ENCODE measurements at regions of chr1 and their contacts with region 1.

Region 1: DNA sequence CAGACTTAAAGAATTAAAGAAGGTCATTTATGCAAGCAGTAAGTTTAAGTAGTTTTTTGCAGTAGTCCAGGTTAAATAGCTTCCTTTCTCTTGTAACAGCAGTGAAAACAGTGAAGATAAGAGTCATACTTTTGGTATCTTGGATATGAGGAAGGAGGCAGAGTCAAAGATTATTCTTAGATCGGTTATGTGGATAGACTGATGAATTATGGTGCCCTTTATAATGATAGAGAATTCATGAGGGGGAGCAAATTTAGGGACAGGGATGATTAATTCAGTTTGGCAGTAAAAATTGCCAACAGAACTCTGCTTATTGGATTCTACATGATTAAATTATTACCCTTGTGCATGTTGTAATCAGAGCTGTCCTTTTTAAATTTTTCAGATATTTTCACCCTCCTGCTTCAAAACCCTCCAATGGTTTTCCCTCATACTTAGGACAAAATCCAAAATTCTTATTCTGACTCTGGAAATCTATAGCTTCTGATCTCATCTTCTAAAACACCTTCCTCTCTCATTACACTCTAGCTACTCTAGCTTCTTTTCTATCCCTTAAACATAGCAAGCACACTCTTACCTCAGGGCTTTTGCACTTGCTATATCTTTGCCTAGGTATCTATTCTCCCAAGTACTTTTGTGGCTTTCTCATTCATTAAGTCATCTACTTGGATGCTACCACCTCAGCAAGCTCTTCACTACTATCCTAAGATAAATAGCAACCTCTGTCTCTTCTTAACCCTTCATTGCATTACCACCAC is 79.8 kb downstream of the PKN2 start:
- DNase-seq: no peak
- ATAC-seq: no peak
- H3K4me3 Mint-ChIP-seq: no peak overlapping the region
- H3K27ac Mint-ChIP-seq: no peak overlapping the region
- H3K4me1 Mint-ChIP-seq: no peaks in the 10 kb centered on the region
- H3K27me3 Mint-ChIP-seq: no peaks in the 10 kb centered on the region
- CTCF ChIP-seq: no peak

Region 2: GRCh38 chr1:88746916-88747315 is 16.9 kb before region 1 on chr1:
- CTCF ChIA-PET with region 1: no interaction called
- POLR2A ChIA-PET with region 1: no interaction called
- intact Hi-C with region 1: loop called (anchors 2 kb)
- DNase-seq: no peak
- ATAC-seq: no peak
- H3K4me3 Mint-ChIP-seq: no peak overlapping the region
- H3K27ac Mint-ChIP-seq: no peak overlapping the region
- H3K4me1 Mint-ChIP-seq: peaks cover 9% of the 10 kb centered on the region
- H3K27me3 Mint-ChIP-seq: no peaks in the 10 kb centered on the region
- CTCF ChIP-seq: no peak

Region 3: DNA sequence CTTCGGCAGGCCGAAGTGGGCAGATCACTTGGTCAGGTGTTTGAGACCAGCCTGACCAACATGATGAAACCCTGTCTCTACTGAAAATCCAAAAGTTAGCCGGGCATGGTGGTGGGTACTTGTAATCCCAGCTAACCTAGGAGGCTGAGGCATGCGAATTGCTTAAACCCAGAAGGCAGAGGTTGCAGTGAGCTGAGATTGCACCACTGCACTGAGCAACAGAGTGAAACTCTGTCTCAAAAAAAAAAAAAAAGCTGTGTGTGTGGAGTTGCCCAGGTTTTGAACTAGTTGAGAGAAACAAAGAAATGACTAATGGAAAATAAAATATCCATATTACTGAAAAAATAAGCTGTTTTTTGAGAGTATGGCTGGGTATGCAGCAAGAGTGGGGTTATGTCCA is 27.4 kb after region 1 on chr1:
- CTCF ChIA-PET with region 1: no interaction called
- POLR2A ChIA-PET with region 1: no interaction called
- intact Hi-C with region 1: loop called (anchors 5 kb)
- DNase-seq: no peak
- ATAC-seq: no peak
- H3K4me3 Mint-ChIP-seq: no peak overlapping the region
- H3K27ac Mint-ChIP-seq: no peak overlapping the region
- H3K4me1 Mint-ChIP-seq: peaks cover 2% of the 10 kb centered on the region
- H3K27me3 Mint-ChIP-seq: no peaks in the 10 kb centered on the region
- CTCF ChIP-seq: no peak

Measured in activated B cell treated with CpG ODN at 0.5 μM for 24 hours (primary cell).